Activated naive CD4-positive, alpha-beta T cell treated with anti-CD3 and anti-CD28 coated beads for 36 hours (primary cell): ENCODE measurements at regions of chr12 and their contacts with region 1.

Region 1: GRCh38 chr12:66269757-66270383 is 32.4 kb upstream of the HELB start:
- DNase-seq: peak; percentile 52
- H3K4me3 Mint-ChIP-seq: no peak overlapping the region
- H3K27ac Mint-ChIP-seq: no peak overlapping the region
- H3K4me1 Mint-ChIP-seq: peaks cover 5% of the 10 kb centered on the region
- H3K27me3 Mint-ChIP-seq: peaks cover 3% of the 10 kb centered on the region

Region 2: DNA sequence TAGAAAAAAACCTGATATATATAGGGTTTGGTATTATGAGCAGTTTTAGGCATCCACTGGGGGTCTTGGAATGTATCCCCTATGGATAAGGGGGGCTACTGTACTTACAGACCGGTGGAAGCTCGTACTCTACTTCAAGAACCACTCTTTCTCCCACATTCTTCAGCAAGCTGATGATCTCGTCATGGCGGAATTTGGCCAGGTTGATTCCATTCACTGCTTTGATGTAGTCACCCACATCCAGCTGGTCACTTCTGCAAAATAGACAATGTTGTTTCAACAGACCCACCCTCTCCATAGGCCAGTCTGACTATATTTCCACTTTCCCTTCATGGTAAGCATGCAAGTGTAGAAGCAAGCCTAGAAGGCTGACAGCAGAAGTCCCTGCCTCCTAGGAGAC is 269.1 kb after region 1 on chr12:
- CTCF ChIA-PET with region 1: no interaction called
- intact Hi-C with region 1: no loop called
- DNase-seq: no peak
- H3K4me3 Mint-ChIP-seq: no peak overlapping the region
- H3K27ac Mint-ChIP-seq: no peak overlapping the region
- H3K4me1 Mint-ChIP-seq: no peaks in the 10 kb centered on the region
- H3K27me3 Mint-ChIP-seq: no peaks in the 10 kb centered on the region

Region 3: GRCh38 chr12:66708704-66709456 is 439.0 kb after region 1 on chr12:
- CTCF ChIA-PET with region 1: interaction called, 3 read pairs
- intact Hi-C with region 1: loop called (anchors 1 kb)
- DNase-seq: no peak
- H3K4me3 Mint-ChIP-seq: peak overlapping the region; percentile 32
- H3K27ac Mint-ChIP-seq: peak overlapping the region; percentile 7
- H3K4me1 Mint-ChIP-seq: peaks cover 33% of the 10 kb centered on the region
- H3K27me3 Mint-ChIP-seq: no peaks in the 10 kb centered on the region